Sciatic nerve (tissue), 2 donors: ENCODE measurements at regions of chr10 and their contacts with region 1.

Region 1: GRCh38 chr10:94443047-94443446 is 40.7 kb downstream of the TBC1D12 start:
- DNase-seq: no peak
- ATAC-seq: no peak

Region 2: GRCh38 chr10:94362360-94363250 is 80.4 kb before region 1 on chr10 and contains the start of gene NOC3L:
- intact Hi-C with region 1: loop called (anchors 10 kb)
- DNase-seq: peak; percentile 97
- ATAC-seq: peak; percentile 100
- total RNA-seq, gene NOC3L: 22.4 TPM